ENCODE measurements at regions of chr12 and their contacts with region 1.

Region 1: GRCh38 chr12:47276621-47277309 is 197.0 kb upstream of the AMIGO2 start:
- DNase-seq: peak; percentile 78
- H3K4me3 Mint-ChIP-seq: peak overlapping the region; percentile 30
- H3K27ac Mint-ChIP-seq: peak overlapping the region; percentile 88
- H3K4me1 Mint-ChIP-seq: peaks cover 86% of the 10 kb centered on the region
- H3K27me3 Mint-ChIP-seq: no peaks in the 10 kb centered on the region

Region 2: DNA sequence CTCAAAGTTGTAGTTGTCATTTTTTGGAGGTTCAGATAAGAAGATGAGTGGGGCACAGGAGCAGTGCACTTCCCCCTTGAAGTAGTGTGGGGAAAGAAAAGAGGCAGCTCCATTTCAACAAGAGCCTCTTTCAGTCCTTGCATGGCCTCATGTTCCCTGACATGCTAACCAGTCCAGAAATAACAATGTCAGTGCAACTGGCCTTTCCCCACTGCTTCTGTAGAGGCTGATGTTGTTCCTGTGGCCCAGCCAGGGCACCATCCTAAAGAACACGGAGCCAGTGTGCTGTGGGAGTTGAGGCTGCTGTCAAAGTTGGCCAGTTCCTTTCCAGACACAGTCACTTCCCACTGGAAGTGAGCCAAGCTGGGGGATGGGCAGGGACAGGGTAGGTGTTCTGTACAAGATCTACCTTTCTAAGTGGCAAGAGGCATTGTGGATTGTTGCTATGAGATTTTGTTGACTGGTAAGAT is 826.5 kb before region 1 on chr12:
- CTCF ChIA-PET with region 1: no interaction called
- intact Hi-C with region 1: loop called (anchors 10 kb)
- DNase-seq: peak; percentile 34
- H3K4me3 Mint-ChIP-seq: no peak overlapping the region
- H3K27ac Mint-ChIP-seq: peak overlapping the region; percentile 47
- H3K4me1 Mint-ChIP-seq: peaks cover 49% of the 10 kb centered on the region
- H3K27me3 Mint-ChIP-seq: no peaks in the 10 kb centered on the region

Region 3: GRCh38 chr12:47216150-47216677 is 60.6 kb before region 1 on chr12:
- CTCF ChIA-PET with region 1: interaction called, 5 read pairs
- intact Hi-C with region 1: loop called (anchors 1 kb)
- DNase-seq: peak; percentile 83
- H3K4me3 Mint-ChIP-seq: peak overlapping the region; percentile 94
- H3K27ac Mint-ChIP-seq: peak overlapping the region; percentile 100
- H3K4me1 Mint-ChIP-seq: peaks cover 12% of the 10 kb centered on the region
- H3K27me3 Mint-ChIP-seq: no peaks in the 10 kb centered on the region

Region 4: DNA sequence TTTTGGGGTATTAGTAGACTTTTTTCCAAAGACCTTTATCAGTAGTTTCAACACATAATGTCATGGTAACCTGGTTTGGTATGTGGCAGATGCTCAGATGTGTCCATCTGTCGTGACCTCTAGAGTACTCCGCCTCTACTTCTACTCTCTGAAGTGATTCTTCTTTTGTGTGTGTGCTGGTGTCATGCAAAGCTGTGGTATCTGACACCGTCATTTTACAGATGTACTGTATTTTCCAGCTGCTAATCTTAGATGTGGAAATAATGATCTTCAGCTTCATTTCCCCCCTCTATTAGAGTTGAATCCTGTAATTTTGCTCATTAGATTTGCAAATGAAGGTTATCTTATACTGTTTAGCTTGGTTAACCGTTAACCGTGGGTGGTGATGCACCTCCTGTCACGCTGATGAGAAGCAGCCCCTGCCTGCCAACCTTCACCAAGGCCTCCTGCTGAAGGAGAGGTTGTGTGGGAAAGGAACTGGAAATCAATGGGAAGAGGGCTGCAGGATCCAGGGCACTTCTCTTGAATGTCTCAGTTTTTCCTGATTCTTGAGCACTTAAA is 25.4 kb after region 1 on chr12:
- CTCF ChIA-PET with region 1: interaction called, 10 read pairs
- intact Hi-C with region 1: loop called (anchors 1 kb)
- DNase-seq: no peak
- H3K4me3 Mint-ChIP-seq: peak overlapping the region; percentile 1
- H3K27ac Mint-ChIP-seq: peak overlapping the region; percentile 93
- H3K4me1 Mint-ChIP-seq: peaks cover 75% of the 10 kb centered on the region
- H3K27me3 Mint-ChIP-seq: no peaks in the 10 kb centered on the region

Region 5: DNA sequence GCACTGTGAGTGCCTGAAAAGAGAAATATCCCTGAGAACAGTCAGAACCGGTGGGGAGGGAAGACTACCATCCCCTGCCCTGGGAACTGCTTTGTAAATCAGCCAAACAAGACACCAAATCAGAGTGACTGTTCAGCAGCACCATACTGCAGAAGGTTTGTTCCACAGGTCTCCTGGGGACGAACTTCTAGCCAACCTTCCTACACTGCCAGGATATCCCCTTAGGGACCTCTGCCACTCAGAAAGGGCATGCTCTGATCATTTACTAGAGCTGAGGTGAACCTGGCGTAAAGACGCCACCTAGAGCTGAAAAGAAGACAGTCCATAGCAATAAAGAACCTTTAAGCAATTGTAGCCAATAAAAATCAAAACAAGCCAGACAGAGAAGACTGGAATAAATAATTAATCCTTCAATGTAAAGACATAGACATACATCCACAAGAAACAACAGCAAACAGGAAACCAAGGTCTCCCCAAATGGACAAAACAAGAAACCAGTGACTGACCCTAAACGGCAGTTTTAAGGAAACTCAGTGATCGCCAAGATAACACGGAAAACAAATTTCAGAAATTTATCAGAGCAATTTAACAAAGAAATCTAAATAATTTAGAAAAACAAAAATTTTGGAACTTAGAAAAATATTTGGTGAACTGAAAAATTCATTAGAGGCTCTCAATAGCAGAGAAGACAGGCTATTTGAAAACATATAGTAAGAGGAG is 31.1 kb after region 1 on chr12:
- CTCF ChIA-PET with region 1: interaction called, 10 read pairs
- intact Hi-C with region 1: loop called (anchors 1 kb)
- DNase-seq: peak; percentile 74
- H3K4me3 Mint-ChIP-seq: peak overlapping the region; percentile 91
- H3K27ac Mint-ChIP-seq: peak overlapping the region; percentile 98
- H3K4me1 Mint-ChIP-seq: peaks cover 73% of the 10 kb centered on the region
- H3K27me3 Mint-ChIP-seq: no peaks in the 10 kb centered on the region

Region 6: GRCh38 chr12:47328831-47329545 is 52.2 kb after region 1 on chr12:
- CTCF ChIA-PET with region 1: no interaction called
- intact Hi-C with region 1: loop called (anchors 1 kb)
- DNase-seq: peak; percentile 34
- H3K4me3 Mint-ChIP-seq: no peak overlapping the region
- H3K27ac Mint-ChIP-seq: peak overlapping the region; percentile 63
- H3K4me1 Mint-ChIP-seq: peaks cover 41% of the 10 kb centered on the region
- H3K27me3 Mint-ChIP-seq: no peaks in the 10 kb centered on the region

Region 7: DNA sequence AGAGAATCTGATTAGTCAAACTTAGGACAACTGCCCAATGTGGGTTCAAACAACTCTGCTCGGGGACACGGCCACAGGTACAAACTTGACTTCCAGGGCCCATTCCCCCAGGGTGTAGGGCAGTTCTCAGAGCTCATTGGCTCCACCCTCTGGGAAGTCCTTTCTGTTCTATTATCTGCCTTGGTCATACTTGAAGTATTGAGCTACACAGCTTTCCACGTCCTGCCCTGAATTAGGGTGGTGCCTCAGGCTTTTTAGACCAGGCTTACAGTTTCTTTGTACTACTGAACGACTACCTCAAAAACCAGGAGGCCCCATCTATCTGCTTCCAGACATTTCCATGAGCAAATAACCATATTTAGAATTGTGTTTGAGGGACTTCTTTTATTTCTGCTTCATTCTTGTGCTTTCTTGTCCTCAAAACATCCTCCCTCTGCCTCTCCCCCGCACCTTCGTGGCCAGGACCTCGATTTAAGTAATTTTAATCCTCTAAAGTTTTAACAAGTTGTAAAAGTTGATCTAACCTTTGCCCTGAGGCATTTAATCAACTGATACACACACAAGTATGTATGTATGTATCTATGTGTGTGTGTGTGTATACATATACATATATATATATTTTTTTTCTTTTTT is 84.7 kb after region 1 on chr12:
- CTCF ChIA-PET with region 1: no interaction called
- intact Hi-C with region 1: loop called (anchors 2 kb)
- DNase-seq: peak; percentile 81
- H3K4me3 Mint-ChIP-seq: peak overlapping the region; percentile 72
- H3K27ac Mint-ChIP-seq: peak overlapping the region; percentile 98
- H3K4me1 Mint-ChIP-seq: peaks cover 58% of the 10 kb centered on the region
- H3K27me3 Mint-ChIP-seq: no peaks in the 10 kb centered on the region

Measured in activated naive CD4-positive, alpha-beta T cell treated with anti-CD3 and anti-CD28 coated beads for 36 hours (primary cell).